Sigmoid colon (tissue), 7 donors: ENCODE measurements at regions of chr11 and their contacts with region 1.

Region 1: DNA sequence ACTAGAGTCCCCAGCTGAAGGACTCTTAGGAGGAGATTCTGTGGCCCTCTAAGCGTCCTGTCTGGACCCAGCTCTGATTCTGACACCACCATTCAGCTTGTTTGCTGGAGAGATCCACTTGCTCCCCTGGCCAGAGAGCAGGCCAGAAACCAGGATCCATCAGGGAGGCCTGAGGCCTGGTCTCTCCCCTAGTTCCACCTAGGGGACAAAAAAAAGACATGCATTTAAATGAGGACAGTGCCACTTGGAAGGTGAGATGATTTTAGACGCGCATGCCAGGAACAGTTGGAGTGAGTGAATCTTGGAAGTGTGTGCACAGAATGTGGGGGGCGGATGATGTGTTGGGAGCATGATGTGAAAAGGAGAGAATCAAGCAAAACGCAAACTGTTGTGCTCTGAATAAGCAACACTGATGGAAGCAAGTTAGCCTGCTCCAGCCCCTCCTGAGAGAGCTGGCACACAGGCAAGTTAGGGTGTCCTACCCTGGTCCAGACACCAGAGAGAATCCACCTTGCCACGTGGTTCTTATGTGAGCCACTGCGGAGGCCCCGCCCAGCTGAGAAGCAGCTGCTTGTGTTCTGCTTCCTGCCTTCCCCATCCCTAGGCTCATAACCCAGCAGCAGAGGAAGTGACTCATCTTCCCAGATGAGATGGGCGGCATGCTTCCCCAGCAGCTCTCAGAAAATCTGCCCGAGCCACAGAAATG is 8.0 kb upstream of the SLCO2B1 start:
- DNase-seq: peak; percentile 88
- H3K4me3 ChIP-seq: no peak overlapping the region
- H3K27ac ChIP-seq: peak overlapping the region in 2 of 4 donors; percentile 1 to 22
- H3K4me1 ChIP-seq: no peaks in the 10 kb centered on the region
- H3K27me3 ChIP-seq: no peaks in the 10 kb centered on the region
- CTCF ChIP-seq: no peak
- EP300 ChIP-seq: no peak
- POLR2A ChIP-seq: no peak

Region 2: GRCh38 chr11:74929431-74930363 is 213.2 kb before region 1 on chr11:
- intact Hi-C with region 1: loop called (anchors 5 kb)
- DNase-seq: peak; percentile 83
- H3K4me3 ChIP-seq: no peak overlapping the region
- H3K27ac ChIP-seq: no peak overlapping the region
- H3K4me1 ChIP-seq: peaks cover 0 to 9% (median 0%) of the 10 kb centered on the region in 4 donors
- H3K27me3 ChIP-seq: no peaks in the 10 kb centered on the region
- CTCF ChIP-seq: peak; percentile 59 to 81 (median 76)
- EP300 ChIP-seq: no peak
- POLR2A ChIP-seq: no peak

Region 3: GRCh38 chr11:75087319-75088305 is 55.3 kb before region 1 on chr11:
- intact Hi-C with region 1: no loop called
- DNase-seq: no peak
- H3K4me3 ChIP-seq: no peak overlapping the region
- H3K27ac ChIP-seq: no peak overlapping the region
- H3K4me1 ChIP-seq: no peaks in the 10 kb centered on the region
- H3K27me3 ChIP-seq: peaks cover 0 to 2% (median 0%) of the 10 kb centered on the region in 3 donors
- CTCF ChIP-seq: no peak
- EP300 ChIP-seq: no peak
- POLR2A ChIP-seq: no peak

Region 4: DNA sequence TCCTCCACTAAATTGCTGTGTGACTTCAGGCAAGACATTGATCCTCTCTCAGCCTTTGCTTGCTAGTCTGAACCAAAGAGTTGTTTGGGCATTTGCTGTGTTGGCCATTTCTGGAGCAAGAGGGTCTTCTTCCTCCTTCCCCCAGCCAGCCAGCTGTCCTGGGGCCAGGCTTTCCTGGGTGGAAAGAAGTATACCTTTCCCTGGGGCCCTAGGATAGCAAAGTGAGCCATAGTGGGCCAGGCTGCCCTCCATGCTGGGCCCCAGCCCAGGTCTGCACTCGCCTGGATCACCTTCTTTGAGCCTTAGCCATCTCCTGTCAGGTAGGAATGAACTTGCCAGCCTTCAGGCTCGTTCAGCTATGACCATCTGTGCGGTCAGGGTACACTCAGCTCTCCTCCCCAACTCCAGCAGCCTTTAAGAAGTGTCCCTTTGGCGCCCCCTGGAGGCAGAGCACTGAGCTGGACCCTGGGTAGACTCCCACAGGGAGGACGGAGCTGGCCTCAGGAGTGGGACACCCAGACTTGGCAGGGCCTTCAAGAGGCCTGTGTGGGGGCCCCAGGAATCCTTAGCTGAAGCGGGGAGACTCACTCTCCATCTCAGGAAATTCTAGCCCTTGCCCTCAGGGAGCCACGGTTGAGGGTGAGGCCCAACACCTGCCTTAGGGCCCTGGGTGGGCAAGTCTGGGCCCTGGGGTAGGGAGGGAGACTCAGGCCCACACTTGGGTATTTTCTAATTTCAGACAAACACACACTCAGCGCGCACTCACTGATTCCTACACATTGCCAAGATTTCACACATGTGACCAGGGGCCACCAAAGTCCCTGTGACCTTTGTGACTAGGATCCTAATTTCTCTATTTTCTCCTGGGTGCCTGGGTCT is 62.1 kb after region 1 on chr11:
- intact Hi-C with region 1: loop called (anchors 2 kb)
- DNase-seq: peak; percentile 87
- H3K4me3 ChIP-seq: no peak overlapping the region
- H3K27ac ChIP-seq: no peak overlapping the region
- H3K4me1 ChIP-seq: no peaks in the 10 kb centered on the region
- H3K27me3 ChIP-seq: no peaks in the 10 kb centered on the region
- CTCF ChIP-seq: peak; percentile 25 to 72 (median 66)
- EP300 ChIP-seq: no peak
- POLR2A ChIP-seq: no peak

Region 5: DNA sequence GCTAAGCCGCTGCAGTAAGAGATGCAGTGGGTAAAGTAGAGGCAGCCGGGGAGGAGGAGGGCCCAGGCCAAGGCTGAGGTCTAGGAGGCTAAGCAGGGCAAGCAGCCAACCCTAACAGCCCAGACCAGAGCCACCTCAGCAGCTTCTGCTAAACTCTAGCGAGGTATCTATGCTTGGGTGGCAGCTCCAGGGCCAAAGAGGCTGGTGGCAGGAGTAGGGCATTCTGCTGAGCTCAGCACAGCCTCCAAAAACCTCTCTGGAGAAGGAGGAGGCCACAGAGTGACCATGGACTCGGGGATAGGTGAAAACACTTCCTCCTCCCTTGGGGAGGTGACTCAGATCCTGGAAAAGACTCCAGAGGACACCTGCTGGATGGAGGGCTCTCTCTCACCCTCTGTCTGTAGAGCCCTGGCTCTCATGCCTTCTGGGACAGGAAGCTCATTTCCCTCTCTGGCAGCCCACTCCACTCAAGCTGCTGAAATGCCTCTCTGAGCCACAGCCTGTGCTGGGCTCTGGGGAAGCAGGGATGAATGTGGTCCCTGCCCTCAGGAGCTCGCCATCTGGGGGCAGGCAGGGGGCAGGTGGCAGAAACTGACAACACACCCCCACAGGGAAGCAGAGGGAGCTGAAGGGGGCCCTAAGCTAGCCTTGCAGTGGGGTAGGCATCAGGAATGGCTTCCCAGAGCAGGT is 81.2 kb after region 1 on chr11:
- intact Hi-C with region 1: no loop called
- DNase-seq: no peak
- H3K4me3 ChIP-seq: no peak overlapping the region
- H3K27ac ChIP-seq: no peak overlapping the region
- H3K4me1 ChIP-seq: no peaks in the 10 kb centered on the region
- H3K27me3 ChIP-seq: no peaks in the 10 kb centered on the region
- CTCF ChIP-seq: no peak
- EP300 ChIP-seq: no peak
- POLR2A ChIP-seq: no peak